ENCODE measurements at regions of chr4 and their contacts with region 1.

Region 1: GRCh38 chr4:181821039-181822004 is 421.9 kb upstream of the TENM3 start:
- ATAC-seq: peak in 6 of 8 experiments; percentile 43 to 92 (median 64)
- H3K4me3 ChIP-seq: no peak overlapping the region
- H3K27ac ChIP-seq: no peak overlapping the region
- H3K4me1 ChIP-seq: peaks cover 20 to 28% of the 10 kb centered on the region in 2 donors

Region 2: DNA sequence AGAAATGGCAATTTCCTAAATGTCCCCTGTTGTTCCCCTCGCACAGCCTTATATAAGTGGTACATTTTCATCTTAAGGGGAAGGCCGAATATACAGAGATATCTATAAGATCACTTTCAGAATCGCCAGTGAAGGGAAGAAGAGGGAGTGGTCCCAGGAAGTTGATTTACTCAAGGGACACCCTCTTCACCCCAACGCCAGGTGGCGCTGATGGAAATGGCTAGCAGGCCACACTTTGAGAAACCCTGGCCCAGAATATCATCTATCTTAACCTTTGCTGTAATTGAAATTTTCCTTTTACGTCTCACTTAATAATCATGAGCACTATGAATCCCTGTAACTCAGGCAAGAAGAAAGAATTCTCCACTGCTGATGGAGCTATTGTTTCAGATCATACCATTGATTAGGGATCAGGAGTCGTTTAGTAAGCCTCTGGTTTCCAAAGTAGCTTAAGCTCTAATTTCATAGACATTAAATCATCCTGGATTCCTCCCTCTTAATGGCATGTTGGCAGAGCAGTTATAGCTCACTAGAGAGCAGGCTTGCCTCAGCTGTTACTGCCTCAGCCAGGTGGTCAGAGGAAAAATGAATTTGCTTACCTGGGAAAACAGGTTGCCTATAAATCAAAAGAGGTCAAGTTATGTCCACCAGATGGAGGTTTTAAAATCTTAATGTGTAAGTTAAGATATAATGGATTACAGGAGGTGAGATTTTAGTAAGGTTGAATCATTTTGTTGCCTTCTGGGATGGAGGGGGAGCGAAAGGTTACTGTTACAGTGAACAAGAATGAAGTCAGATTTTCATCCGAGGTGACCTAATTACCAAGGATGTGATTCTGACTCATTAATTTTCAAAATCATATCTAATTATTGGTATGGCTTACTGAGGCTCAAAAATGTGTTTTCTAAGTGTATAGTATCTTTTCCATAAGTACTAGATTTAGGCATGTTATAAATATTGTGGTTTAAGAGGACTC is 519.3 kb before region 1 on chr4:
- in situ Hi-C with region 1: loop called in 1 of 9 experiments (anchors 25 kb)
- ATAC-seq: peak in 6 of 8 experiments; percentile 38 to 85 (median 64)
- H3K4me3 ChIP-seq: no peak overlapping the region
- H3K27ac ChIP-seq: no peak overlapping the region
- H3K4me1 ChIP-seq: peaks cover 0 to 3% of the 10 kb centered on the region in 2 donors

Measured in motor neuron (in vitro differentiated cells).